Psoas muscle (tissue), 8 donors: ENCODE measurements at regions of chrX and their contacts with region 1.

Region 1: GRCh38 chrX:109959356-109959871 is 43.5 kb upstream of the TMEM164 start:
- DNase-seq: no peak
- ATAC-seq: peak; percentile 49 to 65 (median 59)
- H3K4me3 ChIP-seq: no peak overlapping the region
- H3K27ac ChIP-seq: no peak overlapping the region
- H3K4me1 ChIP-seq: no peaks in the 10 kb centered on the region
- H3K27me3 ChIP-seq: peaks cover 0 to 5% (median 0%) of the 10 kb centered on the region in 3 donors
- CTCF ChIP-seq: no peak

Region 2: GRCh38 chrX:110002300-110003166 is 43.1 kb after region 1 on chrX and contains the start of gene TMEM164:
- intact Hi-C with region 1: loop called in 1 of 2 experiments (anchors 5 kb)
- DNase-seq: peak; percentile 85 to 92
- ATAC-seq: peak; percentile 84 to 90 (median 86)
- H3K4me3 ChIP-seq: peak within 1 kb of the TSS; percentile 73
- H3K27ac ChIP-seq: peak within 1 kb of the TSS; percentile 86
- H3K4me1 ChIP-seq: peaks cover 19% of the 10 kb centered on the region
- H3K27me3 ChIP-seq: peaks cover 0 to 15% (median 0%) of the 10 kb centered on the region in 3 donors
- CTCF ChIP-seq: no peak
- total RNA-seq, gene TMEM164: 27.0 to 42.4 (median 38.4) TPM